Panc1 (cell line): ENCODE measurements at regions of chr3 and their contacts with region 1.

Region 1: GRCh38 chr3:187913617-187914291 is 168.5 kb upstream of the BCL6 start:
- DNase-seq: peak; percentile 57
- ATAC-seq: peak; percentile 91
- H3K4me3 ChIP-seq: no peak overlapping the region
- H3K27ac ChIP-seq: peak overlapping the region; percentile 94
- H3K4me1 ChIP-seq: peaks cover 34% of the 10 kb centered on the region
- H3K27me3 ChIP-seq: no peaks in the 10 kb centered on the region
- CTCF ChIP-seq: no peak

Region 2: DNA sequence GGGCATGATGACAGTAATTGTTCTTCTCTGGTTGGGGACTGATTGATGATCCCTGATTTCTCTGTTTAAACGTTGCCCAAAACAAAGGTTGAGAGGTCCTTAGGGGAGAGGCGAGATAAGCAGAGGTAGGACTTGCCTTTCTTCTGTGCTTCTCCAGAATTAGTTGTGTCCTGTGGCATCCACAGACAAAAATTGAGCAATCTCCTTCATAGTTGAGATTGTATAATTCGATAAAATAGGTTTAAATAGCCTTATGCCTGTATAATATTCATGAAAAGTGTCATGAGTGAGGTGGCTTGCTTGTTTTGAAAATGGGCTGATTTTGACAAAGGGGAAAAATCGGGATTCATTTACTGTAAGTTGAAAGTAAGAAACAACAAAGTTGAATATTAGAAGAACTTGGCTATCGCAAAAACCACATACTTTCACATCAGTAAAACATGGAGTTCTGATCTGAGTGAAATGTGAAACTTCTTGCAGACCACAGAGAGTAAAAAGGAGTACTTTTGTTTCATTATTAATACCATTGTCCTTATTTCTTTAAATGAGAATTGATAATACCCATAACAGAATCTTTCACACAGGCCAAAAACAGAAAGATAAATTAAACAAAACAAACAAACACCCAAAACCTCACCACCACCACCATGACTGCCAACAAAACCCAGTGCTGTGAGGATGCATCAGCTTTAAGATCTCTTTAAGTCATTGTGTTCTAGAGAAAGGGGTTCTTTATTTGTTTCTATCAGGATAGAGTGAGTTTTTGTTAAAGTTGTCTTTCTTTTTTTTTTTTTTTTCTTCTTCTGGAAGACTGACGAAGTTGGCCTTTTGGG is 395.9 kb after region 1 on chr3:
- CTCF ChIA-PET with region 1: interaction called, 10 read pairs
- POLR2A ChIA-PET with region 1: no interaction called
- in situ Hi-C with region 1: no loop called
- intact Hi-C with region 1: no loop called
- DNase-seq: no peak
- ATAC-seq: no peak
- H3K4me3 ChIP-seq: no peak overlapping the region
- H3K27ac ChIP-seq: no peak overlapping the region
- H3K4me1 ChIP-seq: no peaks in the 10 kb centered on the region
- H3K27me3 ChIP-seq: no peaks in the 10 kb centered on the region
- CTCF ChIP-seq: no peak

Region 3: DNA sequence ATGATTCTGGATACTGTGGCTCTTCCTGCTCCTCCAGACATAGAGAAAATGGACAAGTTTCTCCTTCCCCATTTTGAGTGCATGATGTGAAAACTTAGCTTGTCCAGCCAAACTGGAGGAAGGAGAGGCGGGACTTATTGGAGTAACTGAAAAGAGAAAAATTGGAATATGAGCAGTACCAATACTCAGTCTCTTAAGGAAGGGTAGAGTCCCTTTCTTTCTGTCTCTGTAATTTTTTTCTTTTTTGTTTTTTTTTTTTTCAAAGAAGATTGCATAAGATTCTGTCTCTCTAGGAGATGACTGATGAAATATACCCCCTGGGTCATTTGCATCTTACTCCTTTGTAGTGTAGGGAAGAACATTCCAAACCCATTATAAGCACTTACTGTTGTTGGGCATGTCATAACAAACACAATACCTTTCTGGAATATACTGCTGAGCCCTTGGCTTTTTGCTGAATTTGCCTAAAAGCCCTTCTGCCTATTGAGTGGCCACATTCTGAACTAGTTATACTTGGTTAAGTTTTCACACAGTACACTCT is 760.0 kb after region 1 on chr3:
- CTCF ChIA-PET with region 1: no interaction called
- POLR2A ChIA-PET with region 1: interaction called, 15 read pairs
- in situ Hi-C with region 1: no loop called
- intact Hi-C with region 1: no loop called
- DNase-seq: no peak
- ATAC-seq: no peak
- H3K4me3 ChIP-seq: no peak overlapping the region
- H3K27ac ChIP-seq: no peak overlapping the region
- H3K4me1 ChIP-seq: peaks cover 6% of the 10 kb centered on the region; the same call in 1 of the 2 replicates
- H3K27me3 ChIP-seq: no peaks in the 10 kb centered on the region
- CTCF ChIP-seq: no peak